Caco-2 (cell line): ENCODE measurements at regions of chr2 and their contacts with region 1.

Region 1: DNA sequence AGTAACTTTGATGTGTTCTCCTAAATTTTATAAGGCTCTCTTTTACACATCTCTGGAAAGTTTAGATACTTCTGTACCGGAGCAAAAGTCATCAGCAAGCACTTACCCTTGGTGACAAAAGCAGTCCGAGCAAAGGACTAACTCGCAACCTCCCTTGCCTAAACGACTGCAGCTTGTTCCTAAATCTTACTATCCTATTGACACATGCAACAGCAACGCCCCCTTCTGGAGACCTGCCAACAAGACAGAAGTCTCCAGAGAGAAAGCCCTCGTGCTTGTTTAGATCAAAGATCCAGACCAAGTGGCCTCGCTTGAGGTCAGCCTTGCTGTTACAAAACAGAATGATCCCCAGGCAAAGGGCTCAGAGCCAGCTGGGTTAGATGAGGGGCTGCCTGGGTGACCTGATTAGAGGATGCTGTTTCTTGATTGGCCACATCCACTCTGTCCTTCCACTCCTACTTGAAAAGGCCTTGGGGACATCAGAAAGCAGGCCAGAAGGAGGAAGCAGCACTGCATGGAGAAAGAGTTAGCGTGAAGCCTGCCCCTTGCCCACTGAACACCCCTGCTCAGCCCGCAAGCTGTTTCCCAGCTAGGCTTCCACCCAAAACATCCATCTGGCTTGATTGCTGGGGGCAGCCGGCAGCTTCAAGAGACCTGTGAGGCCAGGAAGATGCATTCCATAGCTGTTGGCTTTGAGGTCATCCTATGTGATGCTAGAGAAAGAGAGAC is 94.3 kb downstream of the HNRNPLL start:
- DNase-seq: peak; percentile 88 to 89
- H3K4me3 ChIP-seq: no peak overlapping the region
- H3K4me3 Mint-ChIP-seq: no peak overlapping the region
- H3K27ac Mint-ChIP-seq: no peak overlapping the region
- H3K4me1 ChIP-seq: no peaks in the 10 kb centered on the region
- H3K4me1 Mint-ChIP-seq: no peaks in the 10 kb centered on the region
- H3K27me3 ChIP-seq: no peaks in the 10 kb centered on the region
- H3K27me3 Mint-ChIP-seq: no peaks in the 10 kb centered on the region
- CTCF ChIP-seq: peak; percentile 81 to 93

Region 2: DNA sequence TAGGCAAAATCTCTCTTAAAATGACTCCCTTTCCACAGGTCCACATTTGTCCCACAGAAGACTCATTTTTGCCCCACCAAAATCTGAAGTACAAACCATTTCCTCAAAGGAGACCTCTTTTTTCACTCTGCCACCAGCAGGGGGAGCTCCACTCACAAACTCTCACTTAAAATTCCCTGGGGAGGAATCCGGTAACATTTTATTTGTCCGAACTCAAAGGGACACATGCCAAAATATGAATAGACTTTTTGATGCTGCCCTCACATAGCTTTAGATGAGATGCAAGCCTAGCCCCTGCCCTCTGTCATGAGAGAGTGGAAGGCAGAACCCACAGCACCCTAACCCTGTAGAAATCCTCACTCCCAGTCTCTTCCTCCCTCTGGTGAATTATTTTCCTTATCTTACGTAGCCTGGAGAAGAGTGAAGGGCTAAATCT is 526.3 kb before region 1 on chr2:
- CTCF ChIA-PET with region 1: no interaction called
- POLR2A ChIA-PET with region 1: no interaction called
- intact Hi-C with region 1: loop called (anchors 2 kb)
- DNase-seq: peak; percentile 69 to 81
- H3K4me3 ChIP-seq: peak overlapping the region; percentile 16; the same call in 1 of the 2 replicates
- H3K4me3 Mint-ChIP-seq: peak overlapping the region; percentile 2
- H3K27ac Mint-ChIP-seq: no peak overlapping the region
- H3K4me1 ChIP-seq: no peaks in the 10 kb centered on the region
- H3K4me1 Mint-ChIP-seq: peaks cover 12% of the 10 kb centered on the region
- H3K27me3 ChIP-seq: no peaks in the 10 kb centered on the region; the same call in 1 of the 2 replicates
- H3K27me3 Mint-ChIP-seq: no peaks in the 10 kb centered on the region
- CTCF ChIP-seq: peak; percentile 91 to 92

Region 3: DNA sequence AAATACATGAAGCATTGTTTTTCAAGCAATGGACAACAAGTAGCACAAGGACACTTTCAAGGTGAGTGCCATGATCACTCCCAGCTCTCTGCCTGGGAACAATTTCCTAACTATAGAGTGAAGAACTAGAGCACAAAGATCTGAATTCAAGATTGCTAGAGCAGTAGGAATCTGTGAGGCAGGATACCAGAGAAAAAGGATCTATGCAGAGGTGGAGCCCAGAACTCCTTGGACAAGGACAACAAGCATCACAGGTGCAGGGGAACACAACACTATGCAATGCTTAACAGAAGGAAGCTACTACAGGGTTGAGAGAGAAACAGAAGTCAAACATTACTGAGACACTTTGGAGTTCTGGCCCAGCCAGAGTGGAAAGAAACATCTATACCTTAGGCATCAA is 156.1 kb before region 1 on chr2:
- CTCF ChIA-PET with region 1: no interaction called
- POLR2A ChIA-PET with region 1: no interaction called
- intact Hi-C with region 1: no loop called
- DNase-seq: no peak
- H3K4me3 ChIP-seq: no peak overlapping the region
- H3K4me3 Mint-ChIP-seq: no peak overlapping the region
- H3K27ac Mint-ChIP-seq: peak overlapping the region; percentile 57
- H3K4me1 ChIP-seq: no peaks in the 10 kb centered on the region
- H3K4me1 Mint-ChIP-seq: peaks cover 6% of the 10 kb centered on the region
- H3K27me3 ChIP-seq: no peaks in the 10 kb centered on the region
- H3K27me3 Mint-ChIP-seq: no peaks in the 10 kb centered on the region
- CTCF ChIP-seq: no peak